ENCODE measurements at regions of chr2 and their contacts with region 1.

Region 1: DNA sequence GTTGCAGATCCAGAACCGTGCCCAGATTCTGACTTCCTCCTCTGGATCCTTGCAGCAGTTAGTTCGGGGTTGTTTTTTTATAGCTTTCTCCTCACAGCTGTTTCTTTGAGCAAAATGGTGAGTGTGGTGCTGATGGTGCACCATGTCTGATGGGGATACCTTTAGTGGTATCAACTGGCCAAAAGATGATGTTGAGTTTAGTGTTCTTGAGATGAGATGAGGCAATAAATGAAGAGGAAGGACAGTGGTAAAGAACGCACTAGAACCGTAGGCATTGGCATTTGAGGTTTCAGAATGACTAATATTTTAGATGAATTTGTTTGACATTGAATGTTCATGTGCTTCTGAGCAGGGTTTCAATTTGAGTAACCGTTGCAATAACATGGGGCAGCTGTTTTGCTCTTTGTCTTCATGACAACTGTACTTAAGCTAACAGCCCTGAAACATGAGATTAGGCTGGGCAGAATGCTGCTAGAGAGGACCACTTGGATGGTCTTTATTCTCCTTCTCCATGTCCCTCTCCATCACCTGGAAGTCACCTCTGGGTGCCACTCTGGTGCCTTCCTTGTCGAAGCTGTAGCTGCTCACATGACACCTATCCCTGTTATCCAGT is 3.9 kb downstream of the CTLA4 start:
- DNase-seq: peak; percentile 60
- ATAC-seq: peak; percentile 47
- H3K4me3 Mint-ChIP-seq: peak overlapping the region; percentile 93
- H3K27ac Mint-ChIP-seq: peak overlapping the region; percentile 100
- H3K4me1 Mint-ChIP-seq: peaks cover 73% of the 10 kb centered on the region
- H3K27me3 Mint-ChIP-seq: no peaks in the 10 kb centered on the region

Region 2: DNA sequence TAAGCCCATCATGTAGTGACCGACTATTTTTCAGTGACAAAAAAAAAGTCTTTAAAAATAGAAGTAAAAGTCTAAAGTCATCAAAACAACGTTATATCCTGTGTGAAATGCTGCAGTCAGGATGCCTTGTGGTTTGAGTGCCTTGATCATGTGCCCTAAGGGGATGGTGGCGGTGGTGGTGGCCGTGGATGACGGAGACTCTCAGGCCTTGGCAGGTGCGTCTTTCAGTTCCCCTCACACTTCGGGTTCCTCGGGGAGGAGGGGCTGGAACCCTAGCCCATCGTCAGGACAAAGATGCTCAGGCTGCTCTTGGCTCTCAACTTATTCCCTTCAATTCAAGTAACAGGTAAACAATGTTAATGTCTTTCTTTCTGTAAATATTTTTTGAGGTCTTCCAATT is 165.1 kb before region 1 on chr2 and contains the start of gene CD28:
- CTCF ChIA-PET with region 1: no interaction called
- POLR2A ChIA-PET with region 1: interaction called, 4 read pairs
- intact Hi-C with region 1: loop called (anchors 2 to 5 kb)
- DNase-seq: peak; percentile 95
- ATAC-seq: peak; percentile 75
- H3K4me3 Mint-ChIP-seq: peak within 1 kb of the TSS; percentile 84
- H3K27ac Mint-ChIP-seq: peak within 1 kb of the TSS; percentile 100
- H3K4me1 Mint-ChIP-seq: peaks cover 44% of the 10 kb centered on the region
- H3K27me3 Mint-ChIP-seq: no peaks in the 10 kb centered on the region
- total RNA-seq, gene CD28: 175 TPM

Region 3: DNA sequence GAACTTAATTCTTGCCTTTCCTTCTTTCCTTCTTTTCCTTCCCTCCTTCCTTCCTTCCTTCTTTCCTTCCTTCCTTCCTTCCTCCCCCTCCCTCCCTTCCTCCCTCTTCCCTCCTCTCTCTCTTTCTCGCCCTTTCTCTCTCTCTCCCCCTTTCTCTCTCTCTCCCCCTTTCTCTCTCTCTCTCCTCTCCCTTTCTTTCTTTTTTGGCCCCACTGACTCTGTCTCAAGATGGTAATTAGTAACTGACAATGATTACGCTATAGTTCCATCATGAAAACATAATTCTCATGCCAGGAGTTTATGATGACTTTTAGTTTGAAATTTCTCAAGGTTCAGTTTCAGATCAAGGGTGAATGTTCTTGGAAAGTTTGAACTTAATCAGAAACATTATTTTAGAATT is 18.7 kb before region 1 on chr2:
- CTCF ChIA-PET with region 1: interaction called, 37 read pairs
- POLR2A ChIA-PET with region 1: interaction called, 21 read pairs
- intact Hi-C with region 1: loop called (anchors 1 kb)
- DNase-seq: no peak
- ATAC-seq: peak; percentile 53
- H3K4me3 Mint-ChIP-seq: peak overlapping the region; percentile 29
- H3K27ac Mint-ChIP-seq: peak overlapping the region; percentile 83
- H3K4me1 Mint-ChIP-seq: peaks cover 65% of the 10 kb centered on the region
- H3K27me3 Mint-ChIP-seq: no peaks in the 10 kb centered on the region

Region 4: DNA sequence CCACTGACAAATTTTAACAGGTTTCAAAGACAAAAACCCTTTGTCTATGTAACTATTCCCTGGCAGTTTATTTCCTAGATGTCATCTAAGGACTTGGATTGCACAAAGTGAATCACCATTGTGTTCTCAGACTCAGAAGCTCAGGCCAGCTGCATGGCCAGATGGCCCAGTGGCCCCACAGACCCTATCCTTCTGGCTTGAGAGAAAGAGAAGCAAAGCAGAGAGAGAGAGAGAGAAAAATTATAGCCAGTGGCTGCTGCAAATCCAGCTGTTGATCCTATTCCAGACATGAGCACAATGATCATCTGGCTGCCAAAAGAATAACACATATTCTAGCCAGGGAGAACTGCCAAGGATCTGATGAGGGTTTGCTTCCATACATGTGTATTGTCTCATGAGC is 21.9 kb after region 1 on chr2:
- CTCF ChIA-PET with region 1: interaction called, 7 read pairs
- POLR2A ChIA-PET with region 1: interaction called, 13 read pairs
- intact Hi-C with region 1: loop called in 1 of 2 experiments (anchors 1 kb)
- DNase-seq: no peak
- ATAC-seq: no peak
- H3K4me3 Mint-ChIP-seq: peak overlapping the region; percentile 23
- H3K27ac Mint-ChIP-seq: peak overlapping the region; percentile 85
- H3K4me1 Mint-ChIP-seq: peaks cover 78% of the 10 kb centered on the region
- H3K27me3 Mint-ChIP-seq: peaks cover 2% of the 10 kb centered on the region

Region 5: GRCh38 chr2:204010628-204011560 is 139.4 kb after region 1 on chr2:
- CTCF ChIA-PET with region 1: no interaction called
- POLR2A ChIA-PET with region 1: interaction called, 4 read pairs
- intact Hi-C with region 1: loop called (anchors 5 kb)
- DNase-seq: peak; percentile 31
- ATAC-seq: peak; percentile 42
- H3K4me3 Mint-ChIP-seq: peak overlapping the region; percentile 34
- H3K27ac Mint-ChIP-seq: peak overlapping the region; percentile 72
- H3K4me1 Mint-ChIP-seq: peaks cover 84% of the 10 kb centered on the region
- H3K27me3 Mint-ChIP-seq: no peaks in the 10 kb centered on the region

Region 6: GRCh38 chr2:205543937-205544702 is 1672.6 kb after region 1 on chr2:
- CTCF ChIA-PET with region 1: no interaction called
- POLR2A ChIA-PET with region 1: no interaction called
- intact Hi-C with region 1: no loop called
- DNase-seq: no peak
- ATAC-seq: peak; percentile 80
- H3K4me3 Mint-ChIP-seq: no peak overlapping the region
- H3K27ac Mint-ChIP-seq: no peak overlapping the region
- H3K4me1 Mint-ChIP-seq: peaks cover 29% of the 10 kb centered on the region
- H3K27me3 Mint-ChIP-seq: no peaks in the 10 kb centered on the region